ENCODE measurements at regions of chr1 and their contacts with region 1.

Region 1: DNA sequence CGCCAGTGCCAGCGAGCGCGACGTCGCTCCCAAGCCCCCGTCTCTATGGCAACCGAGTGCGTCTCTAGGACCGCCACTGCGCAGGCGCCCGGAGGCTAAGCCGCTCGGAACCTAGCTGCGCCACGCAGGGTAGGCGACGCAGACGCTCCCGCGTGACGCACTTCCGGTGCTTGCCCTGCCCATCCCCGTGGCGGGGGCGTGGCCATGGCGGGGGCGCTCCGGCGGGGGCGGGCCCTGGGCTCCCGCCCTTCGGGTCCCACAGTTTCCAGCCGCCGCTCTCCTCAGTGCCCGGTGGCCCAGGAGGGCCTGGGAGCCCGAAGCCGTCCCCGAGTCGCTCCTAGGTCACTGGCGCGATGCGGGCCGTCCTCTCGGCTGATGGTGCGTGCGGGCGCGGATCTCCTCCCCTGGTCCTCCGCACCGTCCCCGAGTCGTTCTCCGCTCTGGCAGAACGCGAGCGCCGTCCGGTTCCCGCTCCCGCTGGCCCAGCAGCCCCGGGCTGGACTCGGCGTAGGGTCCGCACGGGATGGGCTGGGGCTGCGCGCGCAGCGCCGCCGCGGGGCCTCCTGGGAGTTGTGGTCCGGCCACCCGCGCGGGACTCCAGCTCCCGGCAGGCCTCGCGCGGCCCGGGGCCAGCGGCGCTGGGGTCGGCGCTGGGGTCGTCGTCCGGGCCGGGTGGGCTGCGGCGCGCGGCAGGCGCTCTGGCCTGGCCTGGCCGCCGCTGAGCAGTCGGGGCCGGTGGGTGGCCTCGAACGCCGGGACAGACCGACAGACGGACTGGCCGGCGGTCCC is at the start of gene MIB2:
- DNase-seq: peak; percentile 95
- ATAC-seq: peak; percentile 86
- H3K4me3 ChIP-seq: peak within 1 kb of the TSS; percentile 85 to 86
- H3K27ac ChIP-seq: peak within 1 kb of the TSS; percentile 100
- H3K4me1 ChIP-seq: peaks cover 11 to 29% of the 10 kb centered on the region in 2 experiments; a peak in 3 of 4 replicates
- H3K27me3 ChIP-seq: no peaks in the 10 kb centered on the region
- CTCF ChIP-seq: no peak
- POLR2A ChIP-seq: peak; percentile 66
- RAD21 ChIP-seq: no peak
- total RNA-seq, gene MIB2: 194 TPM

Region 2: GRCh38 chr1:1175221-1176062 is 440.0 kb before region 1 on chr1:
- CTCF ChIA-PET with region 1: no interaction called
- POLR2A ChIA-PET with region 1: no interaction called
- RAD21 ChIA-PET with region 1: no interaction called
- intact Hi-C with region 1: no loop called
- DNase-seq: no peak
- ATAC-seq: no peak
- H3K4me3 ChIP-seq: no peak overlapping the region
- H3K27ac ChIP-seq: no peak overlapping the region
- H3K4me1 ChIP-seq: peaks cover 2 to 16% of the 10 kb centered on the region in 2 experiments; a peak in 3 of 4 replicates
- H3K27me3 ChIP-seq: no peaks in the 10 kb centered on the region
- CTCF ChIP-seq: no peak
- POLR2A ChIP-seq: no peak
- RAD21 ChIP-seq: no peak

Region 3: GRCh38 chr1:1629430-1630270 is 14.2 kb after region 1 on chr1:
- CTCF ChIA-PET with region 1: interaction called, 6 read pairs
- POLR2A ChIA-PET with region 1: interaction called, 15 read pairs
- RAD21 ChIA-PET with region 1: interaction called in 1 of 2 experiments, 4 read pairs
- intact Hi-C with region 1: no loop called
- DNase-seq: no peak
- ATAC-seq: no peak
- H3K4me3 ChIP-seq: peak overlapping the region; percentile 69 to 88
- H3K27ac ChIP-seq: peak overlapping the region; percentile 99
- H3K4me1 ChIP-seq: peaks cover 4 to 38% of the 10 kb centered on the region in 2 experiments
- H3K27me3 ChIP-seq: no peaks in the 10 kb centered on the region
- CTCF ChIP-seq: no peak
- POLR2A ChIP-seq: no peak
- RAD21 ChIP-seq: no peak

Measured in HCT116 (cell line).